ENCODE measurements at regions of chr19 and their contacts with region 1.

Region 1: GRCh38 chr19:43532962-43533545 is at the start of gene ZNF575:
- DNase-seq: peak; percentile 93
- ATAC-seq: peak; percentile 54
- H3K4me3 ChIP-seq: peak within 1 kb of the TSS; percentile 71 to 94 (median 76)
- H3K4me3 Mint-ChIP-seq: peak within 1 kb of the TSS; percentile 91
- H3K27ac ChIP-seq: peak within 1 kb of the TSS; percentile 25 to 67
- H3K27ac Mint-ChIP-seq: peak within 1 kb of the TSS; percentile 96
- H3K4me1 ChIP-seq: peaks cover 5 to 28% of the 10 kb centered on the region in 2 donors
- H3K4me1 Mint-ChIP-seq: peaks cover 26% of the 10 kb centered on the region
- H3K27me3 ChIP-seq: no peaks in the 10 kb centered on the region
- H3K27me3 Mint-ChIP-seq: no peaks in the 10 kb centered on the region
- CTCF ChIP-seq: no peak
- total RNA-seq, gene ZNF575: 4.0 and 5.2 TPM in 2 replicates

Region 2: DNA sequence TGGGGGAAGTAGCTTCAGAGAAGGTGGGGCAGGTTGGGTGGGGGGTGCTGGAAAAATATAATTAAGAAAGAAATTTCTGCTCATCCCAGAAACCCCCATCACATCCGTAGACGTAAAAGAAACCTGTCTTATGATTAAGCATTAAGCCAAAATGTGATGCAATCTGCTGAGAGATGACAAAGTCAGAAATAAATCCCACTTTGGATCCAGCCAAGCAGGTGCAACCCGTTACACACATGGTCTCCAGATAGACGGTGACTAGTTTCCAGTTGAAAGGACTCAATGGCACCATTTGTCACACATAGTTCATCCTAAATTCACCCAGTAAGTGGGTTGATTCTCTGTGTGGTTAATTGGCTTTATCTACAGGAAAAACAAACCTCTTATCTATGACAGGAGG is 380.8 kb before region 1 on chr19:
- CTCF ChIA-PET with region 1: no interaction called
- POLR2A ChIA-PET with region 1: no interaction called
- intact Hi-C with region 1: no loop called
- DNase-seq: no peak
- ATAC-seq: no peak
- H3K4me3 ChIP-seq: no peak overlapping the region
- H3K4me3 Mint-ChIP-seq: no peak overlapping the region
- H3K27ac ChIP-seq: no peak overlapping the region
- H3K27ac Mint-ChIP-seq: no peak overlapping the region
- H3K4me1 ChIP-seq: no peaks in the 10 kb centered on the region
- H3K4me1 Mint-ChIP-seq: peaks cover 3% of the 10 kb centered on the region
- H3K27me3 ChIP-seq: no peaks in the 10 kb centered on the region
- H3K27me3 Mint-ChIP-seq: no peaks in the 10 kb centered on the region
- CTCF ChIP-seq: no peak

Region 3: GRCh38 chr19:43446746-43447489 is 86.1 kb before region 1 on chr19:
- CTCF ChIA-PET with region 1: interaction called, 644 read pairs
- POLR2A ChIA-PET with region 1: no interaction called
- intact Hi-C with region 1: no loop called
- DNase-seq: peak; percentile 86
- ATAC-seq: peak; percentile 89
- H3K4me3 ChIP-seq: no peak overlapping the region
- H3K4me3 Mint-ChIP-seq: no peak overlapping the region
- H3K27ac ChIP-seq: no peak overlapping the region
- H3K27ac Mint-ChIP-seq: peak overlapping the region; percentile 8
- H3K4me1 ChIP-seq: peaks cover 0 to 7% of the 10 kb centered on the region in 2 donors
- H3K4me1 Mint-ChIP-seq: peaks cover 5% of the 10 kb centered on the region
- H3K27me3 ChIP-seq: no peaks in the 10 kb centered on the region
- H3K27me3 Mint-ChIP-seq: no peaks in the 10 kb centered on the region
- CTCF ChIP-seq: peak; percentile 95

Region 4: GRCh38 chr19:43519436-43520088 is 13.5 kb before region 1 on chr19:
- CTCF ChIA-PET with region 1: interaction called, 74 read pairs
- POLR2A ChIA-PET with region 1: interaction called, 7 read pairs
- intact Hi-C with region 1: no loop called
- DNase-seq: peak; percentile 87
- ATAC-seq: peak; percentile 59
- H3K4me3 ChIP-seq: no peak overlapping the region
- H3K4me3 Mint-ChIP-seq: peak overlapping the region; percentile 57
- H3K27ac ChIP-seq: no peak overlapping the region
- H3K27ac Mint-ChIP-seq: peak overlapping the region; percentile 87
- H3K4me1 ChIP-seq: peaks cover 15 to 23% of the 10 kb centered on the region in 2 donors
- H3K4me1 Mint-ChIP-seq: peaks cover 17% of the 10 kb centered on the region
- H3K27me3 ChIP-seq: no peaks in the 10 kb centered on the region
- H3K27me3 Mint-ChIP-seq: no peaks in the 10 kb centered on the region
- CTCF ChIP-seq: peak; percentile 93

Region 5: DNA sequence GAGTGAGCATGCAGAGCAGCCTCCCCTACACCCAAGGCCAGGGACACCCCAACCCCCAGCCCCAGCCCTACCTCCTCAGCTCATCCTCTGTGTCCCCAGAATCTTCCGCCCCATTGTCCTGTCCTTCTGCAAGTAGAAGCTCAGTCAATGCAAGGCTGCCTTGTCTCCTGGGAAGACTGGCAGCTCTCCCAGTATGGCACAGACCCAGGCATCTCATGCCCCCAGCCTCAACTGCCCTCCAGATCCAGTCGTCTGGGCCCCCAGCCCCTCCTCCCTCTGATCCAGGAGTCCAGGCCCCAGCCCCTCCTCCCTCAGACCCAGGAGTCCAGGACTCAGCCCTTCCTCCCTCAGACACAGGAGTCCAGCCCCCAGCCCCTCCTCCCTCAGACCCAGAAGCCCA is 12.9 kb after region 1 on chr19:
- CTCF ChIA-PET with region 1: no interaction called
- POLR2A ChIA-PET with region 1: no interaction called
- intact Hi-C with region 1: no loop called
- DNase-seq: no peak
- ATAC-seq: no peak
- H3K4me3 ChIP-seq: no peak overlapping the region
- H3K4me3 Mint-ChIP-seq: no peak overlapping the region
- H3K27ac ChIP-seq: no peak overlapping the region
- H3K27ac Mint-ChIP-seq: no peak overlapping the region
- H3K4me1 ChIP-seq: no peaks in the 10 kb centered on the region
- H3K4me1 Mint-ChIP-seq: no peaks in the 10 kb centered on the region
- H3K27me3 ChIP-seq: no peaks in the 10 kb centered on the region
- H3K27me3 Mint-ChIP-seq: no peaks in the 10 kb centered on the region
- CTCF ChIP-seq: no peak

Region 6: DNA sequence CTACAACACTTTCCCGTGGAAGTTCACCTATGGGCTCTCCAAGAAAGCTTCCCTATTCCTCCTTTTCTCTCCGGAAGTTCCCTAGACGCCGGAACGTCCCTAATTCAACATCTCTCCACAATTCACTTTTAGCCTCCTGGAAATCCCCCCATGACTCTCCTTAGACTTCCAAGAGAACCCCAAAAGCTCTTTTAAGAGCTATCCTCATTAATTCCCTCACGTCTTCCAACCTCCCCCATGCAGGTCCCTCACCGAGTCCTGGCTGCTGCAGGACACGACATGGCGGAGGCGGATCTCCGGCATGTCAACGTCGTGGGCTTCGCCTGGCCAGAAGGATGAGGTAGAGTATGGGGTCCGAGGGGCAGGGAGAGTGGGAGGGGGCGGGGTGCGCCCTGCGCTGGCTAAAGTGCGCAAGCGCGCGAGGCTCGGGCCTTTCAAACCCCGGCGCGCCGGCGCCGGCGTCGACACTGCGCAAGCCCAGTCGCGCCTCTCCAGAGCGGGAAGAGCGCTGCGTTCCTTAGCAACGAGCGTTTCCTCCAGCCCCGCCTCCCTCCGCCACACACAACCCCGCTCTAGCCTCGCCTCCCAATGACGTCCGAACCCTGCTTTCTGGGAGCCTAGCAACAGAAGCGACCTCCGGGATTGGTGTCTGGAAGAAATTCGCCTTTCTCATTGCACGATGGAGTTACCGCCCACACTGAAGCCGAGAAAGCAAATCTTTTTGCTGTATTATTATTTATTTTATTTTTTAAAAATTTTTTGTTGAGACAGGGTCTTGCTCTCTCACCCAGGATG is 42.3 kb after region 1 on chr19 and contains the starts of genes PINLYP and XRCC1:
- CTCF ChIA-PET with region 1: interaction called, 5 read pairs
- POLR2A ChIA-PET with region 1: interaction called, 9 read pairs
- intact Hi-C with region 1: loop called (anchors 1 kb)
- DNase-seq: peak; percentile 99
- ATAC-seq: peak; percentile 99
- H3K4me3 ChIP-seq: peak within 1 kb of the TSS; percentile 67 to 98 (median 82)
- H3K4me3 Mint-ChIP-seq: peak within 1 kb of the TSS; percentile 97
- H3K27ac ChIP-seq: peak within 1 kb of the TSS; percentile 74 to 89
- H3K27ac Mint-ChIP-seq: peak within 1 kb of the TSS; percentile 92
- H3K4me1 ChIP-seq: peaks cover 16 to 29% of the 10 kb centered on the region in 2 donors
- H3K4me1 Mint-ChIP-seq: peaks cover 42% of the 10 kb centered on the region
- H3K27me3 ChIP-seq: no peaks in the 10 kb centered on the region
- H3K27me3 Mint-ChIP-seq: no peaks in the 10 kb centered on the region
- CTCF ChIP-seq: no peak
- total RNA-seq, gene PINLYP: 0.97 and 2.9 TPM in 2 replicates
- total RNA-seq, gene XRCC1: 38.2 and 47.4 TPM in 2 replicates

Region 7: GRCh38 chr19:43651758-43652545 is 118.9 kb after region 1 on chr19:
- CTCF ChIA-PET with region 1: interaction called, 11 read pairs
- POLR2A ChIA-PET with region 1: no interaction called
- intact Hi-C with region 1: no loop called
- DNase-seq: peak; percentile 75
- ATAC-seq: peak; percentile 54
- H3K4me3 ChIP-seq: no peak overlapping the region
- H3K4me3 Mint-ChIP-seq: no peak overlapping the region
- H3K27ac ChIP-seq: no peak overlapping the region
- H3K27ac Mint-ChIP-seq: no peak overlapping the region
- H3K4me1 ChIP-seq: peaks cover 0 to 5% of the 10 kb centered on the region in 2 donors
- H3K4me1 Mint-ChIP-seq: peaks cover 3% of the 10 kb centered on the region
- H3K27me3 ChIP-seq: no peaks in the 10 kb centered on the region
- H3K27me3 Mint-ChIP-seq: no peaks in the 10 kb centered on the region
- CTCF ChIP-seq: peak; percentile 72

Measured in B cell (primary cell).